MCF 10A (cell line): ENCODE measurements at regions of chr16 and their contacts with region 1.

Region 1: GRCh38 chr16:69112285-69113129 is 7.1 kb downstream of the HAS3 start:
- DNase-seq: peak; percentile 55
- H3K4me3 Mint-ChIP-seq: no peak overlapping the region
- H3K27ac Mint-ChIP-seq: peak overlapping the region; percentile 71
- H3K4me1 Mint-ChIP-seq: no peaks in the 10 kb centered on the region
- H3K27me3 Mint-ChIP-seq: no peaks in the 10 kb centered on the region
- CTCF ChIP-seq: peak; percentile 67

Region 2: DNA sequence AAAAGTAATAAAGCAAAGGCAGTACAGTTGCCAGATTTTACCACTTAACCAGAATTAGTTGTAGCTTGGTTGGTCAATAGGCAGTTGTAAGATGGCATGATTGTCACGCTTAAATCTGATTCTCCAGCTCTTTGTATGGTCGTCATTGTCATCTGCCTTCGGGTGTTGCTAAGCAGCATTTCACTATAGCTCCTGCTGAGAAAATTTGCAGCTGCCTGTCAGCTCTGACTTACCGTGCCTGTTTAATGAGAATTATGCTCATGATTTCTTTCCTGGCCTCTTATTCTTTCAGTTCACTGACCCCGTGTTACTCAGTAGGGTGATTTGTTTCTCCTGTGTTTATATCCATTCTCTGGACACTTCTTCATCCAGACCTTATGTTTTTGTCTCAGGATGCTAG is 202.5 kb before region 1 on chr16:
- CTCF ChIA-PET with region 1: interaction called, 10 read pairs
- POLR2A ChIA-PET with region 1: interaction called, 4 read pairs
- intact Hi-C with region 1: no loop called
- DNase-seq: no peak
- H3K4me3 Mint-ChIP-seq: no peak overlapping the region
- H3K27ac Mint-ChIP-seq: no peak overlapping the region
- H3K4me1 Mint-ChIP-seq: no peaks in the 10 kb centered on the region
- H3K27me3 Mint-ChIP-seq: no peaks in the 10 kb centered on the region
- CTCF ChIP-seq: no peak